ENCODE measurements at regions of chr1 and their contacts with region 1.

Region 1: DNA sequence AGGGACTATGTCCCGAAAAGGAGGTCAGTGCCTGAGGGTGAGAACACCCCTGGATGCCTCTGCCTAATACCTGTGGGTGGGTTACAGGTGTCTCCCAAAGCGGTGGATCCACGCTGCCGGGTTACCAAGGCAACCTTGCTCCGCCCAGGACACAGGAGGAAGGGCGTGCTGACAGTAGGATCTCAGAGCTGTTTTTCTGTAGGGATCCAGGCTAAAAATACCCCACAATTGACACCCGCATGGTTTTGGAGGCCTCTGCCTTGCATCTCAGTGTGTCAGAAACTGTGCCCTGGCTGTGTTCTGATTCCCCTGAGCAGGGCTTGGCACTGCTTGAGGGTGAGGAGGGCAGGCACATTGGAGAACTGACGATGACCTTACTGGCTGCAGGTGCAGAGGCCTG is 118.0 kb downstream of the IER5 start:
- DNase-seq: peak; percentile 30 to 31
- ATAC-seq: peak; percentile 59 to 92 (median 81)
- H3K4me3 ChIP-seq: no peak overlapping the region
- H3K27ac ChIP-seq: peak overlapping the region in 6 of 10 donors; percentile 35 to 67 (median 52)
- H3K4me1 ChIP-seq: peaks cover 0 to 19% (median 4%) of the 10 kb centered on the region in 9 donors
- H3K27me3 ChIP-seq: no peaks in the 10 kb centered on the region
- CTCF ChIP-seq: no peak

Region 2: DNA sequence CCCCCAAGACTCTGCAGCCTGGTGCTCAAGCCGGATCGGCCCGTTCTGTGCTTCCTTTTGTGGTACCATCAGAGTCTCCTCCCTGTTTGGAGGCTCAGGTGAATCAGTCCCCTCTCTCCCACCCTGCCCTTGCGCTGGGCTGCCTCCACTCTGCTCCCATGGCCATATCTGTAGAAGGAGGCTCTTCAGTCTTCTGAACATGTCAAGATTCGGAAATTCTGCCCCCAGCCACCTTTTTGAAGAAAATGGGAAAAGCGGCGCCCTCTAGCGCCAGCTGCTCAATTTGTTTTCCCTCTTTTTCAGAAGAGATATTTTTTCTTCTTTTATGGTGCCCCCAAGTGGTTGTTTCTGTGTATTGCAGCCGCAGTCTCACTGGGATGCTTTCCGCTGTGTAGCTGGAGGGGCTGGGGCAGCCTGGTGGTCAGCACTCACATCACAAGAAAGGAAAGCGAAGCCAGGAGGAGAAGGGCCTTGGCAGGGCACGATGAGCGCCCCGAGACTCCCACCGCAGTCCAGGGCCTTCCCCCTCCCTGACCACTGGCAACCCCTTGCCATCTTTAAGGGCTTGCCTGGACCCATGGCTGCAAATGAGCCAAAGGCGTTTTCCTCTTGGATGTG is 218.4 kb after region 1 on chr1:
- intact Hi-C with region 1: loop called in 1 of 10 experiments (anchors 5 kb)
- DNase-seq: peak; percentile 54 to 62
- ATAC-seq: peak in 7 of 8 donors; percentile 16 to 64 (median 56)
- H3K4me3 ChIP-seq: no peak overlapping the region
- H3K27ac ChIP-seq: no peak overlapping the region
- H3K4me1 ChIP-seq: peaks cover 0 to 5% (median 0%) of the 10 kb centered on the region in 9 donors
- H3K27me3 ChIP-seq: peaks cover 0 to 51% (median 17%) of the 10 kb centered on the region in 7 donors
- CTCF ChIP-seq: peak; percentile 79 to 98 (median 98)